Activated CD4-positive, alpha-beta memory T cell treated with anti-CD3 and anti-CD28 coated beads for 36 hours (primary cell): ENCODE measurements at regions of chr2 and their contacts with region 1.

Region 1: DNA sequence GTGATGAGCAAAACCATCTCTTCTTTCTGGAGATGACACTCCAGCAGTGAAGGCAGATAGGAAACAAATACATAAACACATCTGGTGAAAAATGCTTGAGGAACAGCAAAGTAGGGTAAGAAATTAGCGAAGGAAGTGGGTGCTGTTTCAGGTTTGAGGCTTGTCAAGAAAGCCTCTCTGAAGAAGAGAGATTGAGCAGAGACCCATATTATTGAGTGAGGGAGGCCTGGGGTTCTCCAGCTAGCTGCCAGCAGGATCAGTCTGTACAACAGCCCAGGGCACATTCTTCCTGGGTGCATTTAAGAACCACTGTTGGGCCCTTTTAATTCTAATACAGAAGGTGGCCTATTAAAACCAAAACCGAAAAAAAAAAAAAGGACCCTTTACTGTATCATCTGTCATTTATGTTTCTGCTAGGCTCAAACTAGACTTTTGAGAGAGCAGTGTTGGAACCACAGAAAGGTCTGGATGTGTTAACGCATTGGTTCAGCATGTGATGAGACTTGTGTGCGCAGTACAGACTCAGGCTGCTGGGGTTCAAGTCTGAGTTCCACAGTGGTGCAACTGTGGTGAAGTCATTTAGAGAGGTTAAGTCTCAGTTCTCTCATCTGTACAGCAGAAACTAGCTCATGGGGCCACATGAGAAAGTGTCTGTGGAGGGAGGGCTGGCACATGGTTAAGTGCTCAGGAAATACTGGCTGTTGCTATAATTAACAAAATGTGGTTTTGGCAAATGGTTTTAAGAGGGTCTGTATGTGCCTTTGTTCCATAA is 28.9 kb downstream of the MGAT5 start:
- DNase-seq: peak; percentile 73
- H3K4me3 Mint-ChIP-seq: no peak overlapping the region
- H3K27ac Mint-ChIP-seq: peak overlapping the region; percentile 21
- H3K4me1 Mint-ChIP-seq: peaks cover 42% of the 10 kb centered on the region
- H3K27me3 Mint-ChIP-seq: no peaks in the 10 kb centered on the region

Region 2: DNA sequence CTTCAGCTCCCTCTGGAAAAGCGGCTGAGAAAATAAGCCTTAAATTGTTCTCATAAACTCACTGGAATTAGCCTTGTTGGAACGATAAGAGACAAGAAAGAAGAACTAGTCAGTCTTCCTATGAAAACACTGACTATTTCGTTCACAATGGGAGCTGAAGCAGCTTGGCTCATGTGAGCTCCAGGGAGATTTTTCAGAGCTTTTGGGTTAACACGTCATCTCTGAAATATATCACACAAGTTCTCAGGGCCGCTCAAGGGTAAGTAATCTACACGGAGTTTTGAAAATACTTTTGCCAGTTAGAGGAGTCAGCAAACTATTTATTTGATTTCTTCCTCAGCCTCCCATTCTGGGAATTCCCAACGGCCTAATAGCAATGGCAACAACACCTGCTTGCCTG is 345.1 kb before region 1 on chr2:
- CTCF ChIA-PET with region 1: no interaction called
- POLR2A ChIA-PET with region 1: no interaction called
- intact Hi-C with region 1: no loop called
- DNase-seq: no peak
- H3K4me3 Mint-ChIP-seq: no peak overlapping the region
- H3K27ac Mint-ChIP-seq: no peak overlapping the region
- H3K4me1 Mint-ChIP-seq: no peaks in the 10 kb centered on the region
- H3K27me3 Mint-ChIP-seq: peaks cover 4% of the 10 kb centered on the region

Region 3: DNA sequence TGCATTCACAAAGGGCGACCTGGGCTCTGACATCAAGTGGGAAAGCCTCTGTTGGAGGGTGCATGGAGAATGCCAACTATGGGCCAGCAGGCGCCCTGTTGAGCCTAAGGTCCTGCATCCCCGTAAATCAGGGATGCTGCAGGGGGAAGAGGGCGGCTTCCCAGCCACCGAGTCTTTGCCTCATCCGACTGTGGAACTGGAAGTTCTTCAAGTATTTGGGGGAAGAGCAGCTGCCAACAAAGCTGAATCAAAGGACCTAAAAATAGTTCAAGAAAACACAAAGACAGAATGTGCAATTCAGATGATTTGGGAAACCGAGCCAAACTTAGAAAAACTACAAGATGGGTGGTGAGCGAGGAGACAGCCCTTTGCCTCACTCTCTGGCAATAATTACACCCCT is 310.0 kb before region 1 on chr2:
- CTCF ChIA-PET with region 1: no interaction called
- POLR2A ChIA-PET with region 1: no interaction called
- intact Hi-C with region 1: no loop called
- DNase-seq: no peak
- H3K4me3 Mint-ChIP-seq: no peak overlapping the region
- H3K27ac Mint-ChIP-seq: no peak overlapping the region
- H3K4me1 Mint-ChIP-seq: peaks cover 3% of the 10 kb centered on the region
- H3K27me3 Mint-ChIP-seq: peaks cover 7% of the 10 kb centered on the region

Region 4: GRCh38 chr2:134169788-134170187 is 113.0 kb before region 1 on chr2:
- CTCF ChIA-PET with region 1: no interaction called
- POLR2A ChIA-PET with region 1: no interaction called
- intact Hi-C with region 1: loop called (anchors 2 kb)
- DNase-seq: peak; percentile 59
- H3K4me3 Mint-ChIP-seq: no peak overlapping the region
- H3K27ac Mint-ChIP-seq: peak overlapping the region; percentile 68
- H3K4me1 Mint-ChIP-seq: peaks cover 84% of the 10 kb centered on the region
- H3K27me3 Mint-ChIP-seq: no peaks in the 10 kb centered on the region

Region 5: GRCh38 chr2:134218930-134219658 is 63.7 kb before region 1 on chr2:
- CTCF ChIA-PET with region 1: no interaction called
- POLR2A ChIA-PET with region 1: interaction called, 3 read pairs
- intact Hi-C with region 1: loop called (anchors 5 kb)
- DNase-seq: peak; percentile 56
- H3K4me3 Mint-ChIP-seq: peak overlapping the region; percentile 49
- H3K27ac Mint-ChIP-seq: peak overlapping the region; percentile 74
- H3K4me1 Mint-ChIP-seq: peaks cover 67% of the 10 kb centered on the region
- H3K27me3 Mint-ChIP-seq: no peaks in the 10 kb centered on the region

Region 6: GRCh38 chr2:134258684-134259388 is 24.0 kb before region 1 on chr2:
- CTCF ChIA-PET with region 1: interaction called, 5 read pairs
- POLR2A ChIA-PET with region 1: no interaction called
- intact Hi-C with region 1: loop called (anchors 1 kb)
- DNase-seq: peak; percentile 71
- H3K4me3 Mint-ChIP-seq: no peak overlapping the region
- H3K27ac Mint-ChIP-seq: peak overlapping the region; percentile 10
- H3K4me1 Mint-ChIP-seq: peaks cover 75% of the 10 kb centered on the region
- H3K27me3 Mint-ChIP-seq: no peaks in the 10 kb centered on the region

Region 7: DNA sequence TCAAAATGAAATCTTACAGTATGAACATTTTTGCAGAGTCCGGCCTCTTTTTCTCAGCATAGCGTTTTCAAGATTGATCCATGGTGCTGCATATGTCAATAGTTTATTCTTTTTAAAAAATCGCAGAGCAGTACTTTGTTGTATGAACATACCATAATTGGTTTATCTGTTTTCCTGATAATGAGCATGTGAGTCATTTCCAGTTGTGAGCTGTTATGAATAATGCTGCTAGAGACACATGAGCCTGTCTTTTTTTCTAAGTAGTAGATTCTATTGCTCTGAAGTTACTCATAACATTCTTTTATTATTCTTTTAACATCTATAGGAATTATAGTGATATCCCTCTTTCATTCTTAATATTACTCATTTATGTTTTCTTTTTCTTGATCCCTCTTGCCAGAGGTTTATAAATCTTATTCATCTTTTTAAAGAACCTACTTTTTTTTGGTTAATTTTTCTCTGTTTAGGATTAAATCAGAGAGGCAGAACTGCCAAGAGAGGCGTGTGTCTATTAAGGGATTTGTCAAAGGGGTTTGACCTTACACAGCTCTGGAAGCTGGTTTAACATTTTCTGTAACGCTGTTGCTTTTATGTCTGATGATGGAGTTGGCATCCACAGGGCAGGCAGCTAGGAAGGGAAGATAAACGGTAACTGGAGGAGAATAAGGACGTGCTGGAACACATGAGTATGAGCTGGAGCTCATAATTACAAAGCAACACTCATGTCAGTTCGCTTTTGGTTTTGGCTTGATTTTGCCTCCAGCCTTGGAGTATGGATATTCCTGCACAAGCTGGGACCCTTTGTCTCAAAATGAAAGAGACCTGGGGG is 18.5 kb after region 1 on chr2:
- CTCF ChIA-PET with region 1: interaction called, 4 read pairs
- POLR2A ChIA-PET with region 1: interaction called, 3 read pairs
- intact Hi-C with region 1: loop called (anchors 1 kb)
- DNase-seq: no peak
- H3K4me3 Mint-ChIP-seq: no peak overlapping the region
- H3K27ac Mint-ChIP-seq: no peak overlapping the region
- H3K4me1 Mint-ChIP-seq: peaks cover 49% of the 10 kb centered on the region
- H3K27me3 Mint-ChIP-seq: no peaks in the 10 kb centered on the region

Region 8: GRCh38 chr2:134320930-134321329 is 38.1 kb after region 1 on chr2:
- CTCF ChIA-PET with region 1: no interaction called
- POLR2A ChIA-PET with region 1: no interaction called
- intact Hi-C with region 1: loop called (anchors 2 kb)
- DNase-seq: peak; percentile 64
- H3K4me3 Mint-ChIP-seq: no peak overlapping the region
- H3K27ac Mint-ChIP-seq: no peak overlapping the region
- H3K4me1 Mint-ChIP-seq: peaks cover 45% of the 10 kb centered on the region
- H3K27me3 Mint-ChIP-seq: no peaks in the 10 kb centered on the region